CD8-positive, alpha-beta memory T cell (primary cell): ENCODE measurements at regions of chr2 and their contacts with region 1.

Region 1: GRCh38 chr2:636641-637405 is 40.4 kb downstream of the TMEM18 start:
- DNase-seq: peak; percentile 37 to 60 (median 49)
- H3K4me3 ChIP-seq: peak overlapping the region; percentile 64
- H3K4me3 Mint-ChIP-seq: peak overlapping the region; percentile 49 to 87 (median 80)
- H3K27ac ChIP-seq: no peak overlapping the region
- H3K27ac Mint-ChIP-seq: peak overlapping the region in 3 of 8 donors; percentile 47 to 85 (median 71)
- H3K4me1 ChIP-seq: no peaks in the 10 kb centered on the region
- H3K4me1 Mint-ChIP-seq: peaks cover 3 to 6% (median 5%) of the 10 kb centered on the region in 3 donors
- H3K27me3 ChIP-seq: no peaks in the 10 kb centered on the region
- H3K27me3 Mint-ChIP-seq: peaks cover 4 to 16% of the 10 kb centered on the region in 2 donors

Region 2: DNA sequence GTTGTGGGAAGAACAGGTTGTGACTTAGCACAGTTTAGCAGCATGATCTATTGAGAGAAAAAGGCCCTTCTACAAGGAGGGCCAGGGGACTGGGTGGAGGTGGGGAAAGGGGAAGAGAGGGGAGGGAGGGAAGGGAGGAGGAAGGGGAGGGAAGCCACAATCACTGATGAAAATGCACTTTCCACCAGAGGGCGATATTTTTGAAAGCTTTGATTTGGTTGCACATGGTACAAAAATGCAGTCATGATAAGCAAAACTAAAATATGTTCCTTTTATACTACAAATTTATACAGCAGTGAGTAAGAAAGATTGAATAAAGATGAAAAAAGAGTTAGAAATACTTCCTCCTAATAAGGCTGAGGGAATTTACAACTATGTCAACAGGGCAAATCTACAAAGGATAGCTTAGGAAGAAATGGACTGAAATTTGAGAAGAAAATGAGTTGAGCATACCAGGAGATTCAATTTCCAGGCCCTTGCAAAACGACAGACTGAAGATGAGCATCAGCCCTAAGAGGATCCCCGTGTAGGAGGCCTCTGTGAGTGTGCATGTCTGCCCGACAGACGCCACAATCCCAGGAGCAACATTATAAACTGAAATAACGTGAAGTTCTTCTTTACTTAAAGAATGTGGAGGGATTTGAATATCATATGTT is 390.2 kb before region 1 on chr2:
- CTCF ChIA-PET with region 1: interaction called, 21 read pairs
- POLR2A ChIA-PET with region 1: no interaction called
- DNase-seq: peak in 2 of 5 donors; percentile 24 to 44
- H3K4me3 ChIP-seq: no peak overlapping the region
- H3K4me3 Mint-ChIP-seq: no peak overlapping the region
- H3K27ac ChIP-seq: no peak overlapping the region
- H3K27ac Mint-ChIP-seq: peak overlapping the region in 2 of 8 donors; percentile 73 to 74
- H3K4me1 ChIP-seq: no peaks in the 10 kb centered on the region
- H3K4me1 Mint-ChIP-seq: peaks cover 4 to 7% (median 6%) of the 10 kb centered on the region in 3 donors
- H3K27me3 ChIP-seq: no peaks in the 10 kb centered on the region
- H3K27me3 Mint-ChIP-seq: no peaks in the 10 kb centered on the region

Region 3: DNA sequence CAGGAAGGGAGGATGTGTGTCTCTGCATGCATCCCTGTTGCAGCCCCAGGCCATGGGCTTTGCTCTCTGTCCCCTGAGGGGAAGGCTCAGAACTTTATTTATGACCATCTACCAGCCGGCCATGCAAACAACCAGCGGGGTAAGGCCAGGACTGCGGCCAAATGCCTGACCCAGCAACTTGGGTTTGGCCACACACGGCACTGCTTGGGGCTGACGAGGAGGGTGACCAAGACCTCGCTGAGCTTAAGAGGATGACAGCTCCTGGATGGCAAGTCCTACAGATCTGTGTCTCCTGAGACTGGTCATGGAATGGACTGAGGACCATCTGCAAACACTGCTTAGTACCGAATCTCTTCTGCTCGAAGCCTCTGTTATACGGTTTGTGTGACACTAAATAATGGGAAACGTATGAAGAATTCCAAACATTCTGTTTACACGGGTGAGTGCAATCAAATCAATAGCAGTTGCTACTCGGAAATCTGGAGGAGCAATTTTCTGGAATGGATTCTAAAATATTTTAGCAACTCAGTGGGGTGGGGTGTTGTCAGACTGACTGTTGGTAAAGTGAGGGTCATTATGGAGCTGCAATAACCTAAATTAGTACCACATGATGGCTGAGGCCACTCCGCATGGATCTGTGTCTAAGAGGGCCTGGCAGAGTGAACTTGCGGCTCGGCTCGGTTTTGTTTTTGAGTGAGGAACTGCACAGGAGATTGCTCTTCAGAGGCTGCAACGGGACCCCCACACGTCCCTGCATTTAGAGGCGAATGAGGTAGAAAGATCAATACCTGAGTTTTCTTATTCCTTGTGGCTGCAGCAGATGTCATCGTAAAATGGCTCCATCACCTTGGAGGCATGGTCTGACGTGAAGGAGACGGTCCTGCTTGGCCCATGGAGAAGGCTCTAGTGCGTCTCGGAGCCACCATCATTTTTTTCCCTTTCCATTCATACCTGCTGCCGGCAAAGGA is 13.8 kb after region 1 on chr2:
- CTCF ChIA-PET with region 1: interaction called, 12 read pairs
- POLR2A ChIA-PET with region 1: no interaction called
- DNase-seq: peak in 1 of 5 donors; percentile 30
- H3K4me3 ChIP-seq: no peak overlapping the region
- H3K4me3 Mint-ChIP-seq: no peak overlapping the region
- H3K27ac ChIP-seq: no peak overlapping the region
- H3K27ac Mint-ChIP-seq: no peak overlapping the region
- H3K4me1 ChIP-seq: peaks cover 4% of the 10 kb centered on the region
- H3K4me1 Mint-ChIP-seq: peaks cover 3 to 13% (median 5%) of the 10 kb centered on the region in 3 donors
- H3K27me3 ChIP-seq: no peaks in the 10 kb centered on the region
- H3K27me3 Mint-ChIP-seq: peaks cover 4 to 28% of the 10 kb centered on the region in 2 donors